ENCODE measurements at regions of chr2 and their contacts with region 1.

Region 1: DNA sequence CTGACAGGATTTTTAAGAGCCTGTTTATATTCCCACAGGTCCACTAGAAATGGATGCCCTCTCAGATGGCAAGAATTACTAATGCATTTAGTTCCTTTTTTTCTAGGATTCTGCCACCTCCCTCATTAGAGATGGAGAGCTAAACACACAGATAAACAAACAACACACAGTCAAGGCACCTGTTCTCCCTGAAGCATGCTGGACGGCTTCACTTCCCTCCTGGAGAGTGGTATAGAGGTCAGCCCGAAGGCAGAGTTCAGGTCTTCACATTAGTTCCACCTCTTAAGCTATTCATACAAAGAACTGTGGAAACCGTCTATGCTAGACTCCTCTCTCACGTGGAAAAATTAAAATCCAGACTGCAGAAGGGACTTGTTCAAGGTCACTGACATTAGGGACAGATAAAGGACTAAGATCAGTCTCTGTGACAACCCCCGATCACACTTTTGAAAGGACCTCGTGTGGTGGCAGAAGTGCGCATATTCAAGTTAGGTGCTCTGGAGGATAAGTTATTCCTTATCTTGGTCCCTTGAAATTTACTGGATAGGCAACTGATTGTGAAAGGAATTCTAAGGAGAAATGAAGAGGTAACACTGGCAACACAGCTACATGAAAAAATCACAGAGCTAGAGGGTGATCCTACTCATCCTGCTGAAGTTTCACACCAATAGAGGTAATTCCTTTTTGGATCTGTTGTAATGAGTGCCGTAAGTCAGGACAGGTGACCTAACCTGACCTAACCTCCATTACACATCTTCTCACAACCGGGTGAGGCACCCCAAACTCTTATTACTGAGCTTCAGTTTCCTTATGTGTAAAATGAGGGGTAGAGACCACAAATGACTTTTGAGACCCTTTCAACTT is 75.1 kb downstream of the SPRED2 start:
- DNase-seq: no peak
- ATAC-seq: no peak
- H3K4me3 ChIP-seq: no peak overlapping the region
- H3K27ac ChIP-seq: no peak overlapping the region
- H3K4me1 ChIP-seq: peaks cover 17% of the 10 kb centered on the region
- H3K27me3 ChIP-seq: no peaks in the 10 kb centered on the region
- CTCF ChIP-seq: no peak
- POLR2A ChIP-seq: no peak
- RAD21 ChIP-seq: no peak

Region 2: DNA sequence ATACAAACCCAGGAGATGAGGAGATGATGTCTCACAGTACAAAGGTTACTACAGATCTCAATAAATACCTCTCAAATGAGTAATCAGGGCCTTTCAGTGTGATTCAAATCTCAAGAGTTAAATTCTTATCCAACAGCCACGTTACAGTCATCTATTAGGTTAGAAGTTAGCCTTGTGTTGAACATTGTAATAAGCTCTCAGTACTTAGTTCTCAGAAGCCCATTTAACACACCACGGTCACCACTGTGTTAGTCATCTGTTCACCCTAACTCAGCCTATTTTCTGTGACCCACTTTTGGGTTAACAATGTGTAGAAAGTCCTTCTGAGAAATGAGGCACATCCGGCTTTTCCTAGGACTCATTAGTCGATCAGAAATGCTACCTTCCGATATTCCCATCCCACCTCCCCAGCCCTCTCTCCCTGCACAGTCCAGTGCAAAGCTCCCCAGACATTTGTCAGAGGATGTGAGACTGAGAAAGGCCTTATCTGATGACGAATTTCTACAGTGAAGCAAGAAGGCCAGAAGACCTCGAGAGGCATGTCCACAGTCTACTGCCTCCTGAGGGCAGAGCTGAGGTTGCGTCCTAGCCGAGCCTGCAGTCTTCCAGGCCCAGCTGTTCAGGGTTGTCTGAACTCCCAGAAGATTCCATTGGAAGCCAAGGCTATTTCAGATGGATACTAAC is 37.1 kb before region 1 on chr2:
- CTCF ChIA-PET with region 1: interaction called, 4 read pairs
- POLR2A ChIA-PET with region 1: no interaction called
- dilution Hi-C with region 1: no loop called
- in situ Hi-C with region 1: no loop called
- intact Hi-C with region 1: loop called (anchors 5 kb)
- DNase-seq: peak; percentile 98
- ATAC-seq: peak; percentile 83
- H3K4me3 ChIP-seq: peak overlapping the region; percentile 23; the same call in 1 of the 2 replicates
- H3K27ac ChIP-seq: peak overlapping the region; percentile 88
- H3K4me1 ChIP-seq: peaks cover 22% of the 10 kb centered on the region
- H3K27me3 ChIP-seq: no peaks in the 10 kb centered on the region
- CTCF ChIP-seq: peak; percentile 71
- POLR2A ChIP-seq: peak; percentile 38
- RAD21 ChIP-seq: peak; percentile 67

Region 3: GRCh38 chr2:65343386-65343785 is 13.9 kb before region 1 on chr2:
- CTCF ChIA-PET with region 1: no interaction called
- POLR2A ChIA-PET with region 1: no interaction called
- dilution Hi-C with region 1: no loop called
- in situ Hi-C with region 1: no loop called
- intact Hi-C with region 1: loop called (anchors 2 kb)
- DNase-seq: no peak
- ATAC-seq: no peak
- H3K4me3 ChIP-seq: no peak overlapping the region
- H3K27ac ChIP-seq: no peak overlapping the region
- H3K4me1 ChIP-seq: no peaks in the 10 kb centered on the region
- H3K27me3 ChIP-seq: no peaks in the 10 kb centered on the region
- CTCF ChIP-seq: no peak
- POLR2A ChIP-seq: no peak
- RAD21 ChIP-seq: no peak

Region 4: DNA sequence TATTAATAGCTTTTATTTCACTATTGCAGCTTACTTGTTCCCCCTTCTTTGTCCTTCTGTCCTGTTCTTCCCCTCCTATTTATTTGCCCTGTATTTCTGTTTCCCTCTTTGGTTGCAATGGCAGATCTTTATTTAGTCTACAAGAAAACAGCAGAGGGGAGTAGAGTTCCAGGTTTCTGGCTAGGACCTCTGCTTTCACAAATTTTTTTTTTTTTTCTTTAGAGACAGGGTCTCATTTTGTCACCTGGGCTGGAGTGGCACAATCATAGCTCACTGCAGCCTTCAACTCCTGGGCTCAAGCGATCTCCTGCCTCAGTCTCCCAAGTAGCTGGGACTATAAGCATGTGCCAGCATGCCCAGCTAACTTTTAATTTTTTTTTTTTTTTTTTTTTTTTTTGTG is 263.2 kb after region 1 on chr2:
- CTCF ChIA-PET with region 1: no interaction called
- POLR2A ChIA-PET with region 1: no interaction called
- dilution Hi-C with region 1: no loop called
- in situ Hi-C with region 1: no loop called
- intact Hi-C with region 1: no loop called
- DNase-seq: no peak
- ATAC-seq: no peak
- H3K4me3 ChIP-seq: no peak overlapping the region
- H3K27ac ChIP-seq: no peak overlapping the region
- H3K4me1 ChIP-seq: peaks cover 8% of the 10 kb centered on the region; the same call in 1 of the 2 replicates
- H3K27me3 ChIP-seq: peaks cover 47% of the 10 kb centered on the region
- CTCF ChIP-seq: no peak; the same call in 1 of the 2 replicates
- POLR2A ChIP-seq: no peak
- RAD21 ChIP-seq: no peak; the same call in 1 of the 2 replicates